ENCODE measurements at regions of chr14 and their contacts with region 1.

Region 1: DNA sequence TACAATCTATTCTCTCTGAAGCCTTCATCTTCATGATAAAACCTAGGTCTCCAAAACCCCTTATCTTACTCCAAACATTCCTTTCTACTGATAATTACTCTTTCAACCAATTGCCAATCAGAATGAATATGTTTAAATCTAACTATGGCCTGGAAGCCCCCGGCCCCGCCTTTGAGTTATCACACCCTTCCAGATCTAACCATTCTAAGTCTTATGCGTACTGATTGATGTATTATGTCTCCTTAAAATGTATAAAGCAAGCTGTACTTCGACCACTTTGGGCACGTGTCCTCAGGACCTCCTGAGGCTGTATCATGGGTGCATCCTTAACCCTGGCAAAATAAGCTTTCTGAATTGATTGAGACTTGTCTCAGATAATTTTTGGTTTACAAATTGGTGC is 14.4 kb downstream of the PABPN1 start:
- DNase-seq: no peak
- H3K4me3 ChIP-seq: no peak overlapping the region
- H3K27ac ChIP-seq: no peak overlapping the region
- H3K4me1 ChIP-seq: no peaks in the 10 kb centered on the region
- H3K27me3 ChIP-seq: peaks cover 13% of the 10 kb centered on the region; the same call in 1 of the 2 replicates
- CTCF ChIP-seq: no peak
- EP300 ChIP-seq: no peak
- RAD21 ChIP-seq: no peak

Region 2: DNA sequence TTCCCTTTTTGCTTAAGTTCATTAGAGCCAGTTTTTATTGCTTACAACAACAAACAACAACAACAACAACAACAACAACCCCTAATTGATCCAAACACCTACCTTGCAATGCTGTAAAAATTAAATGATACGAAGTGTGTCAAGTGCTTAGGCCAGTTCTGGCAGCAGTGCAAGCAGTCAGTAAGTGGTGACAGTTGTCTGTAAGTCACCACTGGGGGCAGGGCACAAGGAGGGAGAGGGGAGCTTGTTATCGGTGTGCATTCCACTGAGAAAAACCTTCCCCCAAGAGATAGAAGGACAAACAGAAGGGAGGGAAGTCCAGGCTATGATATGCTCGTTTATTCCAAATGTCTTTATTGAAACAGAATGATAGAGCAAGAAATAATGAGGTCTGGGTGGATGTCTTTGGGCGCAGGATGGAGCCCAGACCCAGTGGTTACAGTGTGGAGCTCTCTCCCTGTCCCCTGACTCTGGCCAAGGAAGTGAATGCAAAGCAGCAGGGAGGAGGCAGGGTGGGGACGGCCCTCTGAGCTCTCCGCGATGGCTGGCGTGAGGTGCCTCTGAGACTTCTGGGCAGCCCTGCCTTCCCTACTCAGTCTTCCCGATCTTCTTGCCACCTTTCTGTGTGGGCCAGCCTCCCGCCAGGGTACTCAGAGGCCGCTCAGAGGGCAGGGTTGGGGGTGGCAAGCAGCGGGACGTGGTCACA is 10.5 kb after region 1 on chr14:
- CTCF ChIA-PET with region 1: interaction called, 14 read pairs
- POLR2A ChIA-PET with region 1: no interaction called
- DNase-seq: no peak
- H3K4me3 ChIP-seq: no peak overlapping the region
- H3K27ac ChIP-seq: no peak overlapping the region; a peak in 1 of 4 replicates
- H3K4me1 ChIP-seq: peaks cover 0 to under 1% of the 10 kb centered on the region in 2 experiments; a peak in 1 of 4 replicates
- H3K27me3 ChIP-seq: no peaks in the 10 kb centered on the region
- CTCF ChIP-seq: no peak
- EP300 ChIP-seq: no peak
- RAD21 ChIP-seq: no peak

Measured in SK-N-SH (cell line).